ENCODE measurements at regions of chr3 and their contacts with region 1.

Region 1: DNA sequence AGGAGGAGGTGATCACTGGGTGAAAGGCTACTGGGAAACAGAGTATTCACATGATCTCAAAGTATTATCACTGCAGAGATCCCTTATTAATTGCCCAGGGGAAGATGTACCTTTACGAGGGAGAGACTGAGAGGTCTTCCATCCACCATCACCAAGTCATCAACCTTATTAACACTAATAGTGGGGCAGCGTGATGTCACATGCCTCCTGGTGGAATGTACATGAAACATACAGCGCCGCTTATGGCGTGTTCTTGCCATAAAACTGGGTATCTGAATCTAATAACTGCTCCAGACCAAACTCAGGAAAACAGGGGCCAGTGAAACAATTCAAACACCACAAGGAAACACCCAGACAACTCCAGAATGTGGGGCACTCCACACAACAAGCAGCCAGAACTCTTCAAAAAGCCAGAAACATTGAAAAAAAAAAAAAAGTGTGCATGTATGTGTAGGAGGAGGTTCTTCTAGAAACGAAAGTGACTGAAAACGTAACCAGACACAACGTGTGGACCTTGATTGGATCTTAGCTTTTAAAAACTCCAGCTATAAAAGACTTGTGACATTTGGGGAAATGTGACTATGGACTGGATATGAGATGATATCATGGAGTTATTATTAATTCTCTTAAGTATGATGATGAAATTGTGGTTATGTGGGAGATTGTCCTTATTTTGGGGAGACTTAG is 4.6 kb downstream of the STIMATE start:
- DNase-seq: peak; percentile 71
- ATAC-seq: peak; percentile 38
- H3K4me3 Mint-ChIP-seq: peak overlapping the region; percentile 78
- H3K27ac Mint-ChIP-seq: peak overlapping the region; percentile 94
- H3K4me1 Mint-ChIP-seq: peaks cover 66% of the 10 kb centered on the region
- H3K27me3 Mint-ChIP-seq: no peaks in the 10 kb centered on the region

Region 2: DNA sequence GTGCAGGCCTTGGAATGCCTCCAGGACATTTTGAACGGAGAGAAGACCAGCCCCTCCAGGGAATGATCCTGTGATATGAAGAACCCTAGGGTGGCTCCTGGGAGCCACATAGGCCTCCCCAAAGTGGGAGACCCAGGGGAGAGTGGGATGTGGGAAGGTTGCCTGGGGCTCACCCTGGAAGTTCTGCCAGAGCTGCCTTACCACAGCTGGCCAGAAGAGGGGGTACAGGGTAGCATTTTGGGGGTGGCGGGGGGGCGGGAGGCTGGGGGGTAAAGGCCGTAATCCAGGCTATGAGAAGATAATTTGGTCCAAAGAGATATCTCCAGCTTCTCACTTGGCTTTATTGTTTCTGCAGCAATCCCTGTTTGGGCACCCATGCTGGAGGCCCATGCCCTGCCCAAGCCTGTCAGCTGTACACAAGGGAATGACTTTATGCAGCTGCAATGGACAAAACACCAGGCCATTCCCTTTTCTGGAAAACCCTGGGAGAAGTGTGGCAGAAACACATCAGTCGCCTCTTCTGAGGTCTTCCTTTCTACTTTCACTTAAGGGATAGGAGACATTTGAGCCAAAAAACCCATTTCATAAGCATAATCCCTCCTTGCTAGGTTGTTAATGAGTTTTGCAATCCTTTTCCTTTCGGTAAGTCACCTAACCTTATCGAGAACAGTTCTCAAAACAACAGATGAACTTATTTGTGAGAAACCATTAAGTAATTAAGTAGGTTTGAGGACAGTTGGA is 46.9 kb before region 1 on chr3:
- CTCF ChIA-PET with region 1: interaction called, 10 read pairs
- DNase-seq: no peak
- ATAC-seq: peak; percentile 55
- H3K4me3 Mint-ChIP-seq: no peak overlapping the region
- H3K27ac Mint-ChIP-seq: no peak overlapping the region
- H3K4me1 Mint-ChIP-seq: peaks cover 11% of the 10 kb centered on the region
- H3K27me3 Mint-ChIP-seq: no peaks in the 10 kb centered on the region

Region 3: GRCh38 chr3:52880474-52880873 is 12.3 kb before region 1 on chr3:
- CTCF ChIA-PET with region 1: interaction called, 10 read pairs
- DNase-seq: no peak
- ATAC-seq: no peak
- H3K4me3 Mint-ChIP-seq: no peak overlapping the region
- H3K27ac Mint-ChIP-seq: no peak overlapping the region
- H3K4me1 Mint-ChIP-seq: peaks cover 18% of the 10 kb centered on the region
- H3K27me3 Mint-ChIP-seq: no peaks in the 10 kb centered on the region

Region 4: GRCh38 chr3:52962160-52962559 is 69.4 kb after region 1 on chr3:
- CTCF ChIA-PET with region 1: no interaction called
- DNase-seq: no peak
- ATAC-seq: no peak
- H3K4me3 Mint-ChIP-seq: no peak overlapping the region
- H3K27ac Mint-ChIP-seq: no peak overlapping the region
- H3K4me1 Mint-ChIP-seq: no peaks in the 10 kb centered on the region
- H3K27me3 Mint-ChIP-seq: no peaks in the 10 kb centered on the region

Measured in activated CD8-positive, alpha-beta memory T cell treated with anti-CD3 and anti-CD28 coated beads, Interleukin-2, amount 10 ng/mL, durations not matched to agents 7 days and 5 days (primary cell).